ENCODE measurements at regions of chr4 and their contacts with region 1.

Region 1: DNA sequence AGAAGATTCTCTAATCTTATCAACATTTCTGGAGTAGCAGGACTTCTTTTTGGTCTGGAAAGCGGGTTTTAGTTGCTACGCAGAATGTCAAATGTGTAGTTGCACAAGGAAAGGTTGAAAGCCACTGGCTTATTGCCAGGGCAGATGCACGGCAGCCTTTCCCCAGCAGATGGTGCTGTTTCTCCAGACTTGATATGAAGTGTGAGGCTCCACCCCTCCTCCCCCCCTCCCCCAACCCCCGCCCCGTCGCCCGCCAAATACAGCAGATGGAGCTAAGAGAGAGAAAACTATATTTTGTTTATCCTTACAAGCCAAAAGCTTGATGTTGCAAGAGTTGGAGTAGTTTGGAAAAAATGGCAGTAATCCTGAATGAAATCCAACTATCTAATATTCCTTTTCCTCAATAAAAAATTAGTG is 32.0 kb downstream of the ENOPH1 start:
- DNase-seq: peak; percentile 88
- H3K4me3 ChIP-seq: no peak overlapping the region
- H3K27ac ChIP-seq: no peak overlapping the region
- H3K4me1 ChIP-seq: no peaks in the 10 kb centered on the region
- H3K27me3 ChIP-seq: no peaks in the 10 kb centered on the region

Region 2: GRCh38 chr4:82739316-82740179 is 277.1 kb after region 1 on chr4:
- in situ Hi-C with region 1: loop called (anchors 10 kb)
- DNase-seq: peak; percentile 66
- H3K4me3 ChIP-seq: no peak overlapping the region
- H3K27ac ChIP-seq: no peak overlapping the region
- H3K4me1 ChIP-seq: peaks cover 5% of the 10 kb centered on the region
- H3K27me3 ChIP-seq: no peaks in the 10 kb centered on the region

Region 3: DNA sequence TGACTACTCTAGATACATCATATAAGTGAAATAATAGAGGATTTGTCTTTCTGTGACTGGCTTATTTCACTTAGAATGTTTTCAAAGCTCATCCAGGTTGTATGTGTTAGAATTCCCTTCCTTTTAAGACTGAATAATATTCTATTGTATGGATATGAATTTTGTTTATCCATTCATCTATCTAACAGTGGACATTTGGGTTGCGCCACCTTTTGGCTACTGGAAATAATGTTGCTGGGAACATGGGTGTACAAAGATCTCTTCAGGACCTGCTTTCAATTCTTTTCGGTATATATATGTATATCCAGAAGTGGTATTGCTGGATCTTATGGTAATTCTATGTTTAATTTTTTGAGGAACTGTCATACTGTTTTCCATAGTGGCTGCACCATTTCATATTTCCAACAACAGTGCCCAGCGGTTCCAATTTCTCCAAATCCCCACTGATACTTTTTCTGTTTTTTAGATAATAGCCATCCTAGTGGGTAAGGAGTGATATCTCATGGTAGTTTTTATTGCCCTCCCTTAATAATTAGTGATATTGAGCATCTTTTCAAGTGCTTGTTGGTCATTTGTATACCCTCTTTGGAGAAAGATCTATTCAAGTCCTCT is 339.6 kb after region 1 on chr4:
- in situ Hi-C with region 1: loop called (anchors 10 kb)
- DNase-seq: peak; percentile 58
- H3K4me3 ChIP-seq: no peak overlapping the region
- H3K27ac ChIP-seq: no peak overlapping the region
- H3K4me1 ChIP-seq: peaks cover 4% of the 10 kb centered on the region; the same call in 1 of the 2 replicates
- H3K27me3 ChIP-seq: no peaks in the 10 kb centered on the region

Region 4: GRCh38 chr4:83252782-83253405 is 790.5 kb after region 1 on chr4:
- in situ Hi-C with region 1: loop called (anchors 25 kb)
- DNase-seq: peak; percentile 74
- H3K4me3 ChIP-seq: no peak overlapping the region
- H3K27ac ChIP-seq: no peak overlapping the region
- H3K4me1 ChIP-seq: peaks cover 12% of the 10 kb centered on the region; the same call in 1 of the 2 replicates
- H3K27me3 ChIP-seq: no peaks in the 10 kb centered on the region

Measured in GM23248 (cell line).